ENCODE measurements at regions of chr1 and their contacts with region 1.

Region 1: DNA sequence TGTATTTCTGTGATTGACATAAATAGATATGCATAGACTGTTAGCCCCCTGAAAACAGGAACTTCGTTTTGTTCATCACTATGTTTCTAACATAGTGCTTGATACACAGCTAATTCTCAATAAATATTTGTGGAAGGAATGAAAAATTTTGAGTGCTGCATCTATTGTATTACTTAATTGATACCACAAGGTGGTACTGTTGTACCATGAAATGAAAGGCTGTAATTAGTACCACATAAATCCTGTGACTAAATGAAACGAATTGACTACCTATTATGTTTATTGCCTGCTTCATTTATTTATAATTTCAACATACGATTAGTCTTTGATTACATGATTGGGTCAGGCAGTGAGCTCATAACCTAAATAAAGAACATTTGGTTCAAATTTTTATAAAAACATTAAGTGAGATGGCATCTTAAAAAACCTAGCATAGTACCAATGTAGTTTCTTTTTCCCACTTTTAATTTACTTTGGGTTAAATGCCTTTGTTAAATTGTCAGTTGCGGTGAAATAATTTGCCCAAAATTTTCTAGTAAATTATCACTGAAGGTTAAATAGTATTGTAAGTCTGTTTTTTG is 15.0 kb upstream of the TGFB2 start:
- DNase-seq: peak; percentile 81
- ATAC-seq: peak; percentile 75
- H3K4me3 ChIP-seq: no peak overlapping the region
- H3K27ac ChIP-seq: no peak overlapping the region
- H3K4me1 ChIP-seq: peaks cover 10% of the 10 kb centered on the region; the same call in 1 of the 2 replicates
- H3K27me3 ChIP-seq: no peaks in the 10 kb centered on the region
- CTCF ChIP-seq: peak; percentile 99

Region 2: DNA sequence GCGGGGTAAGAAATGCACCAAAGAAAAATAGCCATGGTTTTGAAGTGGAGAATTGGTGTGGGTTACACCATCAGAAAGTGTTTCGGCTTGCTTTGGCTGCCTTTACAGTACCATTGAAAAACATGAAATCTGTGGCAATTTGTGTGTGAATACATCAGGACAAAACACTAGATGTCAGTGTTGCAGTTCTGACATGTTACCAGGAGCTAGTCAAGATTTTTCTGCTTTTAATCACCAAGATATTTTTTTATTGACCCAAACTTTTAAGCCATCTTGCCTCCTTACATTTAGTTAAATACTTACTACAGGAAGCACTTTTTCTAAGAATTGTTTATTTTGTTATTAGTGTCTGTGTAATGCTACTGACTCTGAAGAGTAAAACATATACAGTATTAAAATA is 30.7 kb before region 1 on chr1:
- CTCF ChIA-PET with region 1: interaction called, 4 read pairs
- POLR2A ChIA-PET with region 1: no interaction called
- intact Hi-C with region 1: loop called (anchors 1 kb)
- DNase-seq: peak; percentile 80
- ATAC-seq: peak; percentile 86
- H3K4me3 ChIP-seq: no peak overlapping the region
- H3K27ac ChIP-seq: no peak overlapping the region
- H3K4me1 ChIP-seq: peaks cover 13% of the 10 kb centered on the region; the same call in 1 of the 2 replicates
- H3K27me3 ChIP-seq: no peaks in the 10 kb centered on the region
- CTCF ChIP-seq: peak; percentile 92

Region 3: DNA sequence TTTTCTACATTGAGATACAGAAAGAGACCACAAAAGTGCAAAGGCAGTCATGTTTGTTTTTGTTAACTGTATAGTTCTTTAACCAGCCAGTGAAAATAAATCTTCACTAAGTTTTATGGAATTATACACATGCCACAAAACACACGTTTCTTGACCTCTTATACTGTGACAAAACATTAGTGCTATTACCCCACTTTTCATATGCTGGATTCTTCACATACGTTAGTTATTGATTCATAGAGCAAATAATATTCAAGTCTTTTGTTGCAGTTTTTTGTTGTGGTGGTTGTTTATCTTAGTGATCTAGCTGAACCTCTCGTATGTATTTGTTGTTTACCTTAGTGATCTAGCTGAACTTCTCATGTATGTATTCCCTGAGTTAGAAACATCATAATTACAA is 871.5 kb after region 1 on chr1:
- CTCF ChIA-PET with region 1: no interaction called
- POLR2A ChIA-PET with region 1: no interaction called
- intact Hi-C with region 1: loop called (anchors 5 kb)
- DNase-seq: peak; percentile 41
- ATAC-seq: no peak
- H3K4me3 ChIP-seq: no peak overlapping the region
- H3K27ac ChIP-seq: no peak overlapping the region
- H3K4me1 ChIP-seq: no peaks in the 10 kb centered on the region
- H3K27me3 ChIP-seq: no peaks in the 10 kb centered on the region
- CTCF ChIP-seq: no peak

Region 4: GRCh38 chr1:219385786-219386427 is 1055.8 kb after region 1 on chr1:
- CTCF ChIA-PET with region 1: no interaction called
- POLR2A ChIA-PET with region 1: no interaction called
- intact Hi-C with region 1: loop called (anchors 1 kb)
- DNase-seq: peak; percentile 96
- ATAC-seq: peak; percentile 98
- H3K4me3 ChIP-seq: no peak overlapping the region
- H3K27ac ChIP-seq: no peak overlapping the region
- H3K4me1 ChIP-seq: peaks cover 4% of the 10 kb centered on the region; the same call in 1 of the 2 replicates
- H3K27me3 ChIP-seq: no peaks in the 10 kb centered on the region
- CTCF ChIP-seq: peak; percentile 99

Region 5: GRCh38 chr1:219416594-219417238 is 1086.6 kb after region 1 on chr1:
- CTCF ChIA-PET with region 1: no interaction called
- POLR2A ChIA-PET with region 1: no interaction called
- intact Hi-C with region 1: loop called (anchors 5 kb)
- DNase-seq: peak; percentile 91
- ATAC-seq: peak; percentile 81
- H3K4me3 ChIP-seq: no peak overlapping the region
- H3K27ac ChIP-seq: no peak overlapping the region
- H3K4me1 ChIP-seq: peaks cover 14% of the 10 kb centered on the region
- H3K27me3 ChIP-seq: no peaks in the 10 kb centered on the region
- CTCF ChIP-seq: peak; percentile 96